HepG2 (cell line): ENCODE measurements at regions of chr17 and their contacts with region 1.

Region 1: DNA sequence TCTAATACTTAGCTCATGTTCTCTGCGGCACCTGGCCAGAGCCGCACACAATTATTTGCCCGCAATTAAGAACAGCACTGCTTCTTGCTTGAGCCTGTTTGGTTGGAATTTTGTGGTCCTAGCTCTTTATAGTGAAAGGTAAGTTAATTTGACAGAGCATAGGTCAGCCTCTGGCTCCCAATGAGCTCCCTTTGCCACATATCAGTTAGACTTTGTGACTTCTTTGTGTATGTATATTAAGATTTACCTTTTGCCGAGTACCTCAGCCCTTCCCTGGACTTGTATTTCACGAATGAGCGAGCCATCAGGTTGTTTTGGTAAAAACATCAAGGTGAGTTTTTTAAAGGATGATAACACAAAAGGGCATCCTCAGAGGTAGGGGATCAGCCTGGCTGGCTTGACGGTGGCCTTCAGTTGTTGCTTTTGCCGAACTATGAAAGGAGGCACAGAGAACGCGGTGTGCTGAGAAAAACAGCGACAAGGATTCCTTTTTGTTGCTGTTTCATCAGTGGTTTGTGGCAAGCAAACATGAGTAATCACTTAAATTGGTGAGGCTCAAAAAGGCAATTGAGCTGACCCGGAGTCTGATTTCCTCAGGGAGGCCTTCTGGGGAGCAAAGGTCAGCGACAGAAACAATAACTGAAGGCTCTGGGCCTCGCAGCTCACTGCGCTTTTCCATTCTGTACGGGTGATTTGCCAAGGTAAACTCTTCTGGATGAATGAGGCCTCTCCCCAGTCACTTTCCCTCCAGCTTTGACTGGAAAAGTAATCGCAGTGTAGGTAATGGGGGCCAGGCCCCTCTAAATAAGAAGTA is 163.6 kb downstream of the HS3ST3A1 start:
- DNase-seq: peak; percentile 94
- ATAC-seq: peak; percentile 96
- H3K4me3 ChIP-seq: peak overlapping the region; percentile 28 to 49 (median 34)
- H3K27ac ChIP-seq: peak overlapping the region; percentile 89
- H3K4me1 ChIP-seq: peaks cover 51% of the 10 kb centered on the region
- H3K27me3 ChIP-seq: no peaks in the 10 kb centered on the region
- CTCF ChIP-seq: no peak
- EP300 ChIP-seq: peak; percentile 13 to 92; a peak in 3 of 4 replicates
- POLR2A ChIP-seq: peak in 1 of 2 experiments; percentile 38; a peak in 2 of 4 replicates
- RAD21 ChIP-seq: no peak; the same call in 1 of the 2 replicates

Region 2: GRCh38 chr17:13337864-13338371 is 100.3 kb before region 1 on chr17:
- CTCF ChIA-PET with region 1: no interaction called
- POLR2A ChIA-PET with region 1: no interaction called
- in situ Hi-C with region 1: no loop called
- intact Hi-C with region 1: loop called (anchors 5 kb)
- DNase-seq: peak; percentile 42
- ATAC-seq: no peak
- H3K4me3 ChIP-seq: peak overlapping the region in 2 of 3 experiments; percentile 5 to 9; a peak in 1 of 6 replicates
- H3K27ac ChIP-seq: no peak overlapping the region
- H3K4me1 ChIP-seq: peaks cover 10% of the 10 kb centered on the region
- H3K27me3 ChIP-seq: no peaks in the 10 kb centered on the region
- CTCF ChIP-seq: peak; percentile 79
- EP300 ChIP-seq: no peak
- POLR2A ChIP-seq: no peak
- RAD21 ChIP-seq: peak; percentile 64; the same call in 1 of the 2 replicates

Region 3: DNA sequence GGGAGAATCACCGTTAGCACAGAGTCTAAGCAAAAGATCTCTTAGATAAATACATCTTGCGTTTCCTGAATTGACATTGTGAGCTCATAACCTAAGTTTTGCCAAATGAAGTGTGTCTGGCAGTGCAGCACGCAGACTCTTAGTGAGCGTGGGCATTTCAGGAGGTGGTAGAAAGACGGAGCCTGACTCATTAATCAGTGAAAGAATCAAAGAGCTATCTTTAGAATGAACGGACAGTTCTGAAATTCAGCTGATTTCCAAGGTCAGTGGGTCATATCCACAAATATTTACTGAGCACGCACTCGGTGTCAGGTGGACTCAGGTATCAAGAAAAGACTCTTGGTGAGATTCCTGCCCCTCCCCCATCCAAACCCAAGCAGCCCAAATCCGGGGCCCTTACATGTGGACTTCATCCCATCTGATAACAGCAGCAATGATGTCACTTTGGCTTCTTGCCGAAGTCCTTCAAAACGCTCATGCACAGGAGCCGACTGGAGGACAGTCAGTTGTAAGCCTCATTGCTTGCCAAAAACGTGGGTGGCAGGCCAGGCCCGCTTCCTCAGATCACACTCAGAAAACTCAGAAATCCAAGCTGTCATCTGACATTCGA is 22.3 kb before region 1 on chr17:
- CTCF ChIA-PET with region 1: no interaction called
- POLR2A ChIA-PET with region 1: interaction called, 19 read pairs
- in situ Hi-C with region 1: no loop called
- intact Hi-C with region 1: loop called (anchors 2 kb)
- DNase-seq: peak; percentile 84
- ATAC-seq: peak; percentile 75
- H3K4me3 ChIP-seq: peak overlapping the region in 1 of 3 experiments; percentile 18; a peak in 1 of 6 replicates
- H3K27ac ChIP-seq: peak overlapping the region; percentile 61
- H3K4me1 ChIP-seq: peaks cover 55% of the 10 kb centered on the region
- H3K27me3 ChIP-seq: no peaks in the 10 kb centered on the region
- CTCF ChIP-seq: peak; percentile 33; the same call in 1 of the 2 replicates
- EP300 ChIP-seq: peak in 1 of 2 experiments; percentile 88; a peak in 1 of 4 replicates
- POLR2A ChIP-seq: no peak
- RAD21 ChIP-seq: no peak